ENCODE measurements at regions of chr7 and their contacts with region 1.

Region 1: DNA sequence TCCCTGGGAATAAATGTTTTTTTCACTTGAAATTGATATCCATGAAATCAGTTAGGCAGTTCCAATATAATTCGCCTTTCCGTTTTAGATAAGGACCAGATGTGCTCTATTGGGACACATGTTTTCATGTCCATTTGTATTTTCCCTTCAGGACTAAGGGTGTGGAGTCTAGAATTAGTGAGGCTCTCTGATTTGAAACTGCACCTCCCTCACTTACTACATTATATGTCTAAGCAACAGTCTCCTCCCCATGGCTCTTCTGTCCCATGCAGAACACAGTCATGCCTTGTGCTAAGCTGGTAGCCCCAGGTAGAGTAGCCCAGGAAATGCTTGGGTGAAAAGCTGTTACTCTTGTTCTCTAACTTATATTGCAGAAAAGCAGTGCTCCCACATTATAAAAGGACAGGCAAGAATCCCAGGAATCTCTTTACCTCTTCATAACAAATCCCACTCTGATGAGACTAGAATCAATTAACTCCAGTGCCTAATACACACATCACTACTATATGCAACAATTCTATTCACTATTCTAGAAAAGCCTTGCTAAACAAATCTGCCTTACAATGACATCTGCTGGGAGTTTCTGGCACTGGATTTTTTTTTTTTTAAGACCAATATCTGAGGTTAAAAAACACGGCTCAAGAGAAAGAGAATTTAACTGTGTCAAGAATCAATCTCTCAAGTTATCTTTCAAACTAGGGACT is 293.9 kb downstream of the SNX13 start:
- DNase-seq: peak; percentile 4 to 43
- H3K4me3 ChIP-seq: no peak overlapping the region
- H3K27ac ChIP-seq: no peak overlapping the region
- H3K4me1 ChIP-seq: no peaks in the 10 kb centered on the region
- H3K27me3 ChIP-seq: no peaks in the 10 kb centered on the region
- CTCF ChIP-seq: peak; percentile 71

Region 2: DNA sequence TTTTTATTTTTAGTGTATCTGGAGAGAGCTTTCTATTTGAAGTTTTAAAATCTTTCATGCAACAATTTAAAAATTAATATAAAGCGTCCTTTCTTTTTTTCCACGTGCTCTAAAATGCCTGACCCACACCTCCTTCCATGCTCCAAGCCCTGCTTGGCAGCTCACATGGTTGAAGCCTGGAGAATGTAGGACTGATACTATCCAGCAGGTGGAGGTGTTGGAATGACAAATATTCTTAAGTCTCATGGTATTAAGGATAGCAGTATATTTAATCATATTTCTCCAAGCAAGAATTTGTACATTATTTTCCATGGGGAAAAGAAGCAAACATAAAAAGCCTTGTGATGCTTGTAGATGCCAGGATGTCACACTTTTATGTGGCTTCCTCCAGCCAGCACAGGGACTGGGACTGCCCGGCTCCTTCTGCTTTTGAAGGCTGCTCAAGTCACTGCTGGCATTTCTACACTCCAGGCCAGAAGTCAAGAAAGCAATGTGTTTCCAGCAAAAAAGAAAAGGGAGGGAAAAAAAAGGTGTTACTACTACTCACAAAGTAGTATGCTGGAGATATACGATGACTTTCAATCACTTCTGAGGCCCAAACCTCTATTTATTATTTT is 950.7 kb before region 1 on chr7:
- CTCF ChIA-PET with region 1: no interaction called
- POLR2A ChIA-PET with region 1: no interaction called
- intact Hi-C with region 1: loop called (anchors 5 kb)
- DNase-seq: peak; percentile 37 to 63
- H3K4me3 ChIP-seq: no peak overlapping the region
- H3K27ac ChIP-seq: no peak overlapping the region
- H3K4me1 ChIP-seq: no peaks in the 10 kb centered on the region
- H3K27me3 ChIP-seq: no peaks in the 10 kb centered on the region
- CTCF ChIP-seq: peak; percentile 89

Region 3: GRCh38 chr7:17304926-17305325 is 341.5 kb before region 1 on chr7:
- CTCF ChIA-PET with region 1: no interaction called
- POLR2A ChIA-PET with region 1: no interaction called
- intact Hi-C with region 1: loop called (anchors 5 kb)
- DNase-seq: peak; percentile 60 to 97
- H3K4me3 ChIP-seq: peak overlapping the region; percentile 15
- H3K27ac ChIP-seq: peak overlapping the region; percentile 66
- H3K4me1 ChIP-seq: peaks cover 76% of the 10 kb centered on the region
- H3K27me3 ChIP-seq: no peaks in the 10 kb centered on the region
- CTCF ChIP-seq: no peak

Region 4: DNA sequence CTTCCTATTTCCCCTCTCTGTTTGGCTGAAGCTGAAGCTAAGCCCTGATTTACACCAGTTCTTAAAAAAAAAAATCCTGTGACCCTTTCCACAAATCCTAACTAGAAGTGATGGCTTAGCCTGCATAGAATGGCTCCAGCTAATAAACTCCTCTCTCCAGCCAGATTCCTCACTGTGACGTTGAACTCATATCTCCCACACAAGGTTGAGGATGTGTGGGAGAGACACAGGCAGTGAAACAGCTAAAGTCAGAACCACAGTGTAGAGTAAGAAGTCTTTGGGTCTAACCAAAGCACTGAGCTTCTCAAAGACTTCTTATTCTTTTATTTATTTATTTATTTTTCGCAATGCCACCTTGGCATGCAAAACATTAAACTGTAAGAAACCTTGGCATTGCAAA is 25.6 kb after region 1 on chr7:
- CTCF ChIA-PET with region 1: interaction called, 3 read pairs
- POLR2A ChIA-PET with region 1: interaction called, 15 read pairs
- intact Hi-C with region 1: no loop called
- DNase-seq: no peak
- H3K4me3 ChIP-seq: no peak overlapping the region
- H3K27ac ChIP-seq: no peak overlapping the region
- H3K4me1 ChIP-seq: no peaks in the 10 kb centered on the region
- H3K27me3 ChIP-seq: no peaks in the 10 kb centered on the region
- CTCF ChIP-seq: no peak